Activated naive CD4-positive, alpha-beta T cell treated with anti-CD3 and anti-CD28 coated beads for 36 hours (primary cell): ENCODE measurements at regions of chr11 and their contacts with region 1.

Region 1: GRCh38 chr11:111359223-111360149 is 19.6 kb downstream of the POU2AF1 start:
- DNase-seq: no peak
- H3K4me3 Mint-ChIP-seq: no peak overlapping the region
- H3K27ac Mint-ChIP-seq: no peak overlapping the region
- H3K4me1 Mint-ChIP-seq: no peaks in the 10 kb centered on the region
- H3K27me3 Mint-ChIP-seq: no peaks in the 10 kb centered on the region

Region 2: DNA sequence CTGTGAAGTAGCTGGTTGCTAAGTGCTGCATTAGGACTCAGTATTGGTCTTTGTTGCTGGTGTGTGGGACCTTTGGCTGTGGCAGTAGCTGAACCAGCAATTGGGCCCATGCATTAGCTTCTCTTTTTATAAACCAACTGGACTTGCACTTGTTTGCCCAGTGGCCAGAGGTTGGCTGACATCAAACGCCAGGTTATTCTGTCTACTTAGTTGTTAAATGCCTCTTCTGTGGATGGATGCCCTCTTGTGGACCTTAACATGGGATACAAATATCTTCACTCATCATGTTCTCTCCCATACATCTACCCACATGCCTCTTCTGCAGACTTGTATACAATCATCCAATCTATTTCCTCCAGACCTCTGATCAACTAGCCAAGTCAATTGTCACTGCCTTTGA is 620.8 kb before region 1 on chr11:
- CTCF ChIA-PET with region 1: no interaction called
- intact Hi-C with region 1: no loop called
- DNase-seq: no peak
- H3K4me3 Mint-ChIP-seq: no peak overlapping the region
- H3K27ac Mint-ChIP-seq: no peak overlapping the region
- H3K4me1 Mint-ChIP-seq: no peaks in the 10 kb centered on the region
- H3K27me3 Mint-ChIP-seq: peaks cover 8% of the 10 kb centered on the region

Region 3: DNA sequence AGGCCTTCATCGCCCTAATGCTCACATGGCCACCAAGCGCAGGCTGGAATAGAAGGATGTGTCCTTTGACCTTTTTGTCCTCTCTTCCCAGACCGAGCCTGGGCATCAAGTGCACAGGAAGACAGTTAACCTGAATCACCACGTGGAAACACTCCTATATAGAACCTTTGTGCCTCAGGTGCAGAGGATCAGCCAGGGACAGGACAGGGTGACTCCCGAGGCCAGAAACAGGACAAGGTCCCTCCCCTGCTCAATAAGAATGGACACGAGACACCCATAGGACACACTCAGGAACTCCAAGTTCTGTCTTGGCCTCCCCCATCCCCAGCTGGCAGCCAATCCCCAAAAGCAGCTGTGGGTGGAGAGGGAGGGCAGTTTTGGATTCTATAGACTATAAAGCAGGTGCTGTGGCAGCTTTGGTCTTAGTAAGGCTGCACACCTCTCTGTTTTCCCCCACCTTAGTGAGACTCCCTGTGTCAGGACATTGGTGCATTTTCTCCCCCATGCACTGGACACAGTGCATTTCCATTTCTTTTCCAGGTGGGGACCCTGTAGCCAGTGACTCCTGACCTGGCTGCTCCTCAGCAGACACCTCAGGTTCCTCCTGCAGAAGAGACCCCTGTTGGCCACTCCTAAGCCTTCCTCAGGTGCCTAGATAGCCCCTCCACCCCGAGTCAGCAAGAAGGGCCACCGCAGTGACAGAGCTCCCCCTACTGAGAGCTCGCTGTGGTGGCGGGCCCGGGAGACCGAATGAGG is 63.2 kb after region 1 on chr11:
- CTCF ChIA-PET with region 1: interaction called, 11 read pairs
- intact Hi-C with region 1: loop called (anchors 1 kb)
- DNase-seq: peak; percentile 70
- H3K4me3 Mint-ChIP-seq: no peak overlapping the region
- H3K27ac Mint-ChIP-seq: no peak overlapping the region
- H3K4me1 Mint-ChIP-seq: peaks cover 7% of the 10 kb centered on the region
- H3K27me3 Mint-ChIP-seq: no peaks in the 10 kb centered on the region